SK-N-SH (cell line): ENCODE measurements at regions of chr9 and their contacts with region 1.

Region 1: DNA sequence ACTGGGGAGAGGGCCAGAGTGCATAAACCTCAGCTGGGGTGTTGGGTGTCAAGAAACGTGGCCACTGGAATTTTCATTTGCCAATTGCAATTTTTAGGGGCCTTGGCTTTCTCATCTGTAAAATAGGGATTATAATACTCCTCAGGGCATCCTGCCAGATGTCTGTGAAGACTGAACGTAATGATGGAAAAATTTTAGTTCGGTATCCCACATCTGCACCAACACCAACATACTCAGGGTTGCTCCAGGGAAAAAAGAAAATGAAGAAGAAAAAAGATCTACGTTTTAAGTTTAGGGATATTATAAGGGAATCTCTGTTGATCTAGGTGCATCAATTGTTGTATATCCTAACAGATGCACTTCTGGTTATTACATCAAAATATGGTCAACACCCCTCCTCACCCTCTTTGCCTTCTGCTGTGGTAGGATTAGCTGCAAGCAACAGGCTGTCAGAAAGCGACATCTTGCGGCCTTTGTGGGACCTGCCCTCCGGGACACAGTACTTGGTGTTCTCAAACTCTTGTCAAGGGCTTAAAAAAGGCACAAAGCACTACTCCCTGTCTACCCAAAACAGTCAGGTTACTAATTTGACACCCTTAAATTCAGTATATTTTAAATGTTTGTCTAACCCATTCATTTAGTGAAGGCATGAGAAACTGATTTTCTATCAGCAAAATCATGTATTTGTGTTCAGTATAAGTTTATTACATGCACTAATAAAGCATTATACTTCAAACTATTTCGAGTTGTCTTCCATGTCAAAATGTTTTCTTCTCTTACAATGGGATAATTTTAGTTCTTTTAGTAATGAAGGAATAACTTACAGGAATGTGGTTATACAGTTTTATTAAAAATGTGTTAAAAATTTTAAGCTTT is 8.3 kb upstream of the TBC1D2 start:
- DNase-seq: peak; percentile 79
- H3K4me3 ChIP-seq: peak overlapping the region in 1 of 2 experiments; percentile 20; a peak in 1 of 4 replicates
- H3K27ac ChIP-seq: no peak overlapping the region
- H3K4me1 ChIP-seq: no peaks in the 10 kb centered on the region
- H3K27me3 ChIP-seq: no peaks in the 10 kb centered on the region
- CTCF ChIP-seq: peak; percentile 98
- EP300 ChIP-seq: no peak
- RAD21 ChIP-seq: peak; percentile 99

Region 2: GRCh38 chr9:98056269-98057137 is 207.2 kb before region 1 on chr9 and contains the start of gene NANS:
- CTCF ChIA-PET with region 1: interaction called, 10 read pairs
- POLR2A ChIA-PET with region 1: no interaction called
- DNase-seq: peak; percentile 98
- H3K4me3 ChIP-seq: peak within 1 kb of the TSS; percentile 67 to 96
- H3K27ac ChIP-seq: peak within 1 kb of the TSS; percentile 81 to 85
- H3K4me1 ChIP-seq: peaks cover 3 to 12% of the 10 kb centered on the region in 2 experiments; a peak in 2 of 4 replicates
- H3K27me3 ChIP-seq: no peaks in the 10 kb centered on the region
- CTCF ChIP-seq: peak; percentile 18; the same call in 1 of the 2 replicates
- EP300 ChIP-seq: peak in 1 of 2 experiments; percentile 41; a peak in 1 of 4 replicates
- RAD21 ChIP-seq: peak; percentile 33
- polyA plus RNA-seq, gene NANS: 53.5 and 61.3 TPM in 2 replicates

Region 3: GRCh38 chr9:98074115-98074990 is 189.4 kb before region 1 on chr9:
- CTCF ChIA-PET with region 1: interaction called, 22 read pairs
- POLR2A ChIA-PET with region 1: no interaction called
- DNase-seq: peak; percentile 79
- H3K4me3 ChIP-seq: no peak overlapping the region
- H3K27ac ChIP-seq: no peak overlapping the region; a peak in 1 of 4 replicates
- H3K4me1 ChIP-seq: no peaks in the 10 kb centered on the region; a peak in 2 of 4 replicates
- H3K27me3 ChIP-seq: no peaks in the 10 kb centered on the region
- CTCF ChIP-seq: peak; percentile 96
- EP300 ChIP-seq: no peak
- RAD21 ChIP-seq: peak; percentile 91

Region 4: GRCh38 chr9:98192503-98193335 is 71.0 kb before region 1 on chr9 and contains the start of gene CORO2A:
- CTCF ChIA-PET with region 1: interaction called, 10 read pairs
- POLR2A ChIA-PET with region 1: interaction called, 3 read pairs
- DNase-seq: peak; percentile 98
- H3K4me3 ChIP-seq: peak within 1 kb of the TSS; percentile 73 to 76
- H3K27ac ChIP-seq: peak within 1 kb of the TSS; percentile 36 to 74; a peak in 2 of 4 replicates
- H3K4me1 ChIP-seq: peaks cover 0 to 11% of the 10 kb centered on the region in 2 experiments; a peak in 1 of 4 replicates
- H3K27me3 ChIP-seq: no peaks in the 10 kb centered on the region
- CTCF ChIP-seq: peak; percentile 57
- EP300 ChIP-seq: no peak
- RAD21 ChIP-seq: peak; percentile 31
- polyA plus RNA-seq, gene CORO2A: 2.3 and 2.7 TPM in 2 replicates

Region 5: DNA sequence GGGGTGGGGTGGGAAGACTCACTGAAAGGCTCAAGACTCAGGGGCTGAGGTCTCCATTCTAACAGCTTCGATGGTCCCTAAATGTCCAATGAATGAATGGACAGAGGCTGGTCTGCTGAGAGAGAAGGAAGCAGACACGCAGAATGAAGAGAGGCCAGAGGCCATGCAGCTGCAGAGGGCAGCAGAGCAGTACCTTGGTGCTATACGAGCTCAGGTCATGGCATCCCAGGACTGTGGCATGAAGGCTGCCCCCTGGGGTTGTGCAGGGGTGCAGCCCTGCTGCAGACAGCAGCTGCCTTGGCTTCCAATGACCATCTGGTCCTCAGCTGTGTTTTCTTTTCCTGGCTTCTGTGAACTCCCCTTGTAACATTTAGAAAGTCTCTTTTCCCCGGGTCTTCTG is 56.1 kb before region 1 on chr9:
- CTCF ChIA-PET with region 1: interaction called, 49 read pairs
- POLR2A ChIA-PET with region 1: no interaction called
- DNase-seq: no peak
- H3K4me3 ChIP-seq: no peak overlapping the region
- H3K27ac ChIP-seq: no peak overlapping the region
- H3K4me1 ChIP-seq: no peaks in the 10 kb centered on the region
- H3K27me3 ChIP-seq: no peaks in the 10 kb centered on the region
- CTCF ChIP-seq: no peak
- EP300 ChIP-seq: no peak
- RAD21 ChIP-seq: no peak

Region 6: GRCh38 chr9:98215821-98216220 is 47.9 kb before region 1 on chr9:
- CTCF ChIA-PET with region 1: interaction called, 16 read pairs
- POLR2A ChIA-PET with region 1: no interaction called
- DNase-seq: peak; percentile 82
- H3K4me3 ChIP-seq: no peak overlapping the region
- H3K27ac ChIP-seq: no peak overlapping the region
- H3K4me1 ChIP-seq: no peaks in the 10 kb centered on the region
- H3K27me3 ChIP-seq: no peaks in the 10 kb centered on the region
- CTCF ChIP-seq: peak; percentile 58
- EP300 ChIP-seq: no peak
- RAD21 ChIP-seq: peak; percentile 73

Region 7: GRCh38 chr9:98234245-98234825 is 29.4 kb before region 1 on chr9:
- CTCF ChIA-PET with region 1: interaction called, 10 read pairs
- POLR2A ChIA-PET with region 1: no interaction called
- DNase-seq: no peak
- H3K4me3 ChIP-seq: no peak overlapping the region
- H3K27ac ChIP-seq: no peak overlapping the region
- H3K4me1 ChIP-seq: 0 out of 4 replicates have a peak, but pooled peaks cover 0 to 10% of the 10 kb centered on the region in 2 experiments
- H3K27me3 ChIP-seq: no peaks in the 10 kb centered on the region
- CTCF ChIP-seq: no peak
- EP300 ChIP-seq: no peak
- RAD21 ChIP-seq: no peak